Esophagus muscularis mucosa (tissue), 4 donors: ENCODE measurements at regions of chr12 and their contacts with region 1.

Region 1: GRCh38 chr12:45215419-45216229 is at the start of gene ANO6:
- DNase-seq: peak; percentile 97
- H3K4me3 ChIP-seq: peak within 1 kb of the TSS; percentile 83 to 90 (median 86)
- H3K27ac ChIP-seq: peak within 1 kb of the TSS; percentile 96 to 98 (median 96)
- H3K4me1 ChIP-seq: peaks cover 26 to 28% (median 28%) of the 10 kb centered on the region in 4 donors
- H3K27me3 ChIP-seq: no peaks in the 10 kb centered on the region
- CTCF ChIP-seq: peak in 1 of 3 experiments; percentile 60
- EP300 ChIP-seq: no peak
- POLR2A ChIP-seq: peak; percentile 80
- total RNA-seq, gene ANO6: 141 to 208 (median 166) TPM

Region 2: GRCh38 chr12:45260104-45260815 is 44.6 kb after region 1 on chr12:
- intact Hi-C with region 1: loop called (anchors 5 kb)
- DNase-seq: no peak
- H3K4me3 ChIP-seq: no peak overlapping the region
- H3K27ac ChIP-seq: peak overlapping the region; percentile 15 to 64 (median 50)
- H3K4me1 ChIP-seq: peaks cover 40 to 95% (median 86%) of the 10 kb centered on the region in 4 donors
- H3K27me3 ChIP-seq: no peaks in the 10 kb centered on the region
- CTCF ChIP-seq: no peak
- EP300 ChIP-seq: no peak
- POLR2A ChIP-seq: no peak

Region 3: DNA sequence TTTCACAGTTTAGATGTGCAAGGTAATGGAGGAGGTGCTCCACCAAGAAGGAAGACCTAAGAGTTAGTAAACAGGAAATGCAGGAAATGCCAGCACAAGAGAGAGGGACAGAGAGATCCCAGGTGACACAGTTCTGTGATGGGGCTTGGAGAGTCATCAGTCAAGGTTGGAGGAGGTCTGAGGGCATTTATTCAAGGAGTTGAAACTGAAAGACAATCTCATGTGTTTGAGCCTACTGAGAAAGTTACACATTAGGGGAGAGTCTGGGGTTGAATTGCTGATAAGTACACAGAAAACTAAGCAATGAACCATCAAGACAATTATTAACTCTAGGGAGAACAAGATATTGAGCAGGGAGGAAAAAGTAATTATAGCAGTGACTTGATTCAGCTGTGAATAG is 138.8 kb after region 1 on chr12:
- intact Hi-C with region 1: loop called (anchors 10 kb)
- DNase-seq: no peak
- H3K4me3 ChIP-seq: no peak overlapping the region
- H3K27ac ChIP-seq: peak overlapping the region in 2 of 4 donors; percentile 73 to 79
- H3K4me1 ChIP-seq: peaks cover 20 to 76% (median 67%) of the 10 kb centered on the region in 4 donors
- H3K27me3 ChIP-seq: no peaks in the 10 kb centered on the region
- CTCF ChIP-seq: no peak
- EP300 ChIP-seq: no peak
- POLR2A ChIP-seq: no peak

Region 4: GRCh38 chr12:45388545-45388944 is 172.9 kb after region 1 on chr12:
- intact Hi-C with region 1: loop called (anchors 2 kb)
- DNase-seq: no peak
- H3K4me3 ChIP-seq: no peak overlapping the region
- H3K27ac ChIP-seq: no peak overlapping the region
- H3K4me1 ChIP-seq: peaks cover 0 to 19% (median 4%) of the 10 kb centered on the region in 4 donors
- H3K27me3 ChIP-seq: no peaks in the 10 kb centered on the region
- CTCF ChIP-seq: peak; percentile 51 to 67 (median 64)
- EP300 ChIP-seq: no peak
- POLR2A ChIP-seq: no peak

Region 5: DNA sequence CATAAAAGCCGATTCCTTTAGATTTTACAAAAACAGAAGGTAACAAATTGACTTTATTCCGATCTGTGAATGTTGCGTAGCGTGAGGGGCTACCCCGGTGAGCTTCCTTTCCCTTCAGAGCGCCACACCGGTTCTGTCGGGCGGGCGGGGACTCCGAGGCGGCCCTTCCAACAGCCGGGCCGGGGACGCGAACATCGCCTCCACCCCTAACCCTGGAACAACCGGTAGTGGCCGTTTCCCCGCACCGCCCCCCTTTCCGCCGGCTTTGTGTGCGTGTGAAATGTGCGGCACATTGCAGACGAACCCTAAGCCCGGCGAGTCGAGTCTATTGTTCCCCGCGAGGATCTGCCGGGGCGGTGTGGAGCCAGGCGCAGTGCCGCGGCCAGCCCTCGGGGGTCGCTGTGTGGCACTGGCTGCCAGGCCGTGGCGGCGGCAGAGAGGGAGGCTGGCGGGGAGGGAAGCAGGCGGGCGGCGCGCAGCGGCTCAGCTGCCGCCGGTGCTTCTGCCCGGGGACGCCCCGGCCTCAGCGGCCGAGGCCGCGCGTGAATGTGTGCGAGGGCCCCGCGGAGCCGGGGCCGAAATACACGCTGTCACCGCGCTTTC is 513.1 kb after region 1 on chr12:
- intact Hi-C with region 1: loop called (anchors 10 kb)
- DNase-seq: peak; percentile 98
- H3K4me3 ChIP-seq: peak overlapping the region; percentile 83 to 88 (median 87)
- H3K27ac ChIP-seq: peak overlapping the region; percentile 98 to 100 (median 99)
- H3K4me1 ChIP-seq: peaks cover 38 to 47% (median 44%) of the 10 kb centered on the region in 4 donors
- H3K27me3 ChIP-seq: no peaks in the 10 kb centered on the region
- CTCF ChIP-seq: peak; percentile 91 to 100 (median 92)
- EP300 ChIP-seq: no peak
- POLR2A ChIP-seq: peak; percentile 81